Heart left ventricle (tissue), 16 donors: ENCODE measurements at regions of chr21 and their contacts with region 1.

Region 1: DNA sequence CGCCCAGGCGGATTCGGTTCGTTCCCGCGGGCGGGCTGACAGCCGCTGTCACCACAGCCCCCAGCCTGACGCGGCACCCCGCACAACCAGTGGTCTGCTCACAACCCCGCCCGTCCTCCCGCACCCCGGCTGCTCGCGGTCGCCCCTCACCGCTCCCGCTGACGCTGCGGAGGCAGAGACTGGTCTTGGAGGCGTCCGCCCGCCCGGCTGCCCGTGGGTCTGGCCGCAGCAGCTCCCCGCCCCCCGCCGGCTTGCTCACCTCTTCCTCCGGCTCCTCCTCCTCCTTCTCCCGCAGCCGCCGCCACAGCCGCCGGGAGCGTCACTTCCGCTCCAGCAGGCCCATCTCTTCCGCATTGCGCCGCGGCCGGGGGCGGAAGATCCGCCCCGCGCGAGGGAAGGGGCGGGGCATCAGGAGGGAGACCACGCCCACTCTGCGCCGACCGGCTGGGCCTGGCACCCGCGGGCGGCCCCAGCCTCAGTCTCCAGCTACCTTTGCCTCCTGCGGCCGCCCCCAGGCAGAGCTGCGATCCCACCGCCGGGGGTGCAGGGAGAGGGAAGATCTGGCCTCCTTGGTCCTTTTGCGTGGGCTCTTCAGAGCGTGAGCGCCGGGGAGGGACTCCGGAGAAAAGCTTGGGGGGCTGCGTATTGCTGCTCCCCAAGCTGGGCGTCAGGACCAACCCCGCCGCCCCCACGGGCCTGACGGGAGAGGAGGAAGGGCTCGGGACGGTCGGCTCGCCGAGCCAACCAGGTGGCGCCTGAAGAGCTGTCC is at the start of gene SYNJ1:
- DNase-seq: peak; percentile 95 to 98 (median 96)
- ATAC-seq: peak; percentile 97 to 99 (median 98)
- H3K4me3 ChIP-seq: peak within 1 kb of the TSS; percentile 64 to 98 (median 84)
- H3K27ac ChIP-seq: peak within 1 kb of the TSS; percentile 76 to 95 (median 91)
- H3K4me1 ChIP-seq: peaks cover 0 to 31% (median 10%) of the 10 kb centered on the region in 12 donors
- H3K27me3 ChIP-seq: no peaks in the 10 kb centered on the region
- CTCF ChIP-seq: peak in 1 of 12 donors; percentile 12
- POLR2A ChIP-seq: peak in 1 of 2 donors; percentile 87
- total RNA-seq, gene SYNJ1: 6.7 to 17.4 (median 11.8) TPM

Region 2: DNA sequence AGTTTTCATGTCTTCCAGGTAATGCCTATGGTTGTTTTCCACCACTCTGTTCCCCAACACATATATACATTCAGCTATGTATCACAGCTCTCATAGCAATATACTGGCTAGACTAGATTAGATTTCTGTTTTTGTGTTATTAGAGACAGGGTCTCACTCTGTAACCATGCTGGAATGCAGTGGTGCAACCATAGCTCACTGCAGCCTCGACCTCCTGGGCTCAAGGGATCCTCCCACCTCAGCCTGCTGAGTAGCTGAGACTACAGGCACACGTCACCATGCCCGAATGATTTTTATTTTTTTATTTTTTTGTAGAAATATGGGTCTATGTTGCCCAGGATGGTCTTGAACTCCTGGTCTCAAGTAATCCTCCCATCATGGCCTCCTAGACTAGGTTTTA is 37.8 kb before region 1 on chr21:
- intact Hi-C with region 1: loop called in 1 of 10 experiments (anchors 5 kb)
- DNase-seq: no peak
- ATAC-seq: no peak
- H3K4me3 ChIP-seq: no peak overlapping the region
- H3K27ac ChIP-seq: no peak overlapping the region
- H3K4me1 ChIP-seq: no peaks in the 10 kb centered on the region
- H3K27me3 ChIP-seq: no peaks in the 10 kb centered on the region
- CTCF ChIP-seq: no peak
- POLR2A ChIP-seq: no peak

Region 3: DNA sequence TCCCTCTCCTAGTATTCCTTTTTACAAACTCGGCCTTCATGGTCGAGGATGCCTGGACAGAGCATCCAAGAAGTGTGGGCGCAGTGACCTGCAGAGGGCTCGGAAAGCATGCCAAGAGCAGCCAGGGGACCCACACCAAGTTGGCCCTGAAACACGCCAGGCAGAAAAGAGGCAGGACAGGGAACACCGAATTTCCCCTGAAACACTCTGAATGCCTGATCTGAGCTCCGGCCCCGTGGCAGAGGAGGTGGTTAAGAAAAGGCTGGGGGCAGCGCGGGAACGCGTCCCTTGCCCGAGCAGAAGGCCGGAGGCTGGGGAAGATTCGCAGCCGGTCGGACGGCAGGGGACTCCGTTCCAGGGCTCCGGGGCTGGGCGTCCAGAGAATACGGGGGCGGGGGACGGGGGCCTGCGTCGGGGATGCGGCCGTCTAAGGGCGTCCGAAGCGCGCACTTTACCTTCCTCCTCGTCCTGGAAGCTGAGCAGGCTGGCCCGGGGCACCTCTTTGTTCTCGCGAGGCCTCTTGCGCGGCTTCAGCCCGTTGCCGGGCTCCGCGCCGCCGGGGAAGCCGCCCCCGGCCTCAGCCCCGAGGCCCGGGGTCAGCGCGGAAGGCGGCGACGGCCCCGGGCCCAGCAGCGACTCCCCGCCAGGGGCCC is 43.1 kb after region 1 on chr21:
- intact Hi-C with region 1: loop called in 5 of 10 experiments (anchors 2 to 5 kb)
- DNase-seq: peak; percentile 55 to 77 (median 67)
- ATAC-seq: peak in 3 of 4 donors; percentile 9 to 69 (median 61)
- H3K4me3 ChIP-seq: peak overlapping the region; percentile 60 to 92 (median 82)
- H3K27ac ChIP-seq: peak overlapping the region; percentile 80 to 95 (median 90)
- H3K4me1 ChIP-seq: peaks cover 2 to 38% (median 29%) of the 10 kb centered on the region in 12 donors
- H3K27me3 ChIP-seq: peaks cover 0 to 4% (median 0%) of the 10 kb centered on the region in 9 donors
- CTCF ChIP-seq: no peak
- POLR2A ChIP-seq: no peak